ENCODE measurements at regions of chr13 and their contacts with region 1.

Region 1: DNA sequence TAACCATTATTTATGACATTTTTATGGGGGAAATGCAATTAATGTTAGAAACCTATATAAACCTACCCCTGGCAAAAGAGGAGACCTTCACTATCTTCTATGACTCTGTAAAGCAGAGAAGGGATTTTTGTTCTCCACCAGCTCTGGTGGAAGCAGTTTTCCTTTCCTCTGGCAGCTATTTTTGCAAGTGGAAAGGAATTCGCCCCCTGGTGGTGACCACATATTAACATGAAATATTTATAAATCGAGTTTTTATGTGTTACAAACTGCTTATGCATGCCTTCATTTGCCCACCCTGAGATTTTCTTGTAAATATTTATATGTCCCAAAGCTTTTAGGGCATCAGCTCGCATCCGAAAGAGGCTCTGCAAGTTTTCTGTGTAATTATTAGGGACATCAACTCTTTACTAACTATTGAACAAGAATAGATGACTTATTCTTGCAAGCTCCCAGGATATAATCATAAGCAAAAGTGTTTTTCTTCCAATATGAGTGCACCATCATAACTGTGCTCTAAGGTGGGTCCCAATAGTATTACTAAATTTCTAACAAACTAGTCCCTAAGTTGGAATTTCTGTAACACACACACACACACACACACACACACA is 62.4 kb downstream of the SERTM1 start:
- DNase-seq: no peak
- H3K4me3 ChIP-seq: no peak overlapping the region
- H3K27ac ChIP-seq: no peak overlapping the region
- H3K4me1 ChIP-seq: no peaks in the 10 kb centered on the region
- H3K27me3 ChIP-seq: no peaks in the 10 kb centered on the region
- CTCF ChIP-seq: peak in 2 of 3 experiments; percentile 35 to 58; a peak in 2 of 4 replicates
- EP300 ChIP-seq: no peak
- POLR2A ChIP-seq: no peak
- RAD21 ChIP-seq: peak; percentile 62 to 63

Region 2: DNA sequence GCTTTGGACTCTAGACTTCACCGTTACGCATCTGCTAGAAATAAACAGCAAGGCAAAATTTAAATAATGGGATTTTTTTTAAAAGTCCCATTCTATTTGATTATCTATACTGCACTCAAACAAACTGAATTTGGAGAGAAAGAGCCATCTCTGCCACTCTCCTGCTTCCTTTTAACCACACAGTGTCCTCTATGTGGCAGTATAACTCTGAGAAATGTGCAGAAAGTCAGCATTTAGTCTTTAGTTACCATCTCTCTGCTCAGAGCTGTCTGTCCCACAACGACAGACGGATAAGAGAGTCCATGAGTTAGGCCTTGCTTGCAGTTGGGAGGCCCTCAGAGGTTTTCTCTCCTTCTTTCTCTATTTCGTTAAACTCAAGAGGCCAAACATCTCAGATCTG is 282.7 kb before region 1 on chr13:
- CTCF ChIA-PET with region 1: interaction called, 53 read pairs
- POLR2A ChIA-PET with region 1: no interaction called
- DNase-seq: no peak
- H3K4me3 ChIP-seq: no peak overlapping the region
- H3K27ac ChIP-seq: no peak overlapping the region
- H3K4me1 ChIP-seq: peaks cover 2 to 9% (median 7%) of the 10 kb centered on the region in 4 experiments; a peak in 4 of 7 replicates
- H3K27me3 ChIP-seq: no peaks in the 10 kb centered on the region
- CTCF ChIP-seq: peak in 2 of 3 experiments; percentile 56 to 57; a peak in 3 of 4 replicates
- EP300 ChIP-seq: no peak
- POLR2A ChIP-seq: no peak
- RAD21 ChIP-seq: peak; percentile 85 to 89

Region 3: DNA sequence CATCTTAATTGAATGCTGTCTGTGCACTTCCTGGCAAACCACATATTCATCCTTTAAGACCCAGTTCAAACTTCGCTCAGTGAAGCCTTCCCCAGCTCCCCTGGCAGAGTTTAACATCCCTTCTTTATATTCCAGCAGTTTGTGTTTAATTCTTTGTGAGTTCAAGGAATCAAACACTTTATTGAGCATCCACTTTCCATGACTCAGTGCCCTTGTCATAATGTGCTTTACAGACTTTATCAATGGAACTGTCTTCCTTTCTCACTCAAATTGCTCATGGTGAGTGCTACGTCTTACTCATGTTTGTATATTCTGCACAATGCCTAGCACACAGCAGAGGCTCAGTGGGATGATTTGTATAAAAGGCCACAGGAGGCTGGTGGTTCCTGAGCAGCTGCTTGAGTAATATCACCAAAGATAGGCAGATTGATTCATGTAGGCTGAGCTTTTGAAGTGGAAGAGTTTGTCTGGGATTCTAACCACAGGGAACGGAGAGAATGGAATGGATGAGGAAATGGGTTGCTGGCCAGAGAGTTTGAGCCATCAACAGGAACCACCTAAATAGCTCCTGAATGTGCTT is 18.2 kb before region 1 on chr13:
- CTCF ChIA-PET with region 1: interaction called, 47 read pairs
- POLR2A ChIA-PET with region 1: no interaction called
- DNase-seq: no peak
- H3K4me3 ChIP-seq: no peak overlapping the region
- H3K27ac ChIP-seq: no peak overlapping the region
- H3K4me1 ChIP-seq: no peaks in the 10 kb centered on the region
- H3K27me3 ChIP-seq: peaks cover 0 to 1% (median 0%) of the 10 kb centered on the region in 4 experiments; a peak in 1 of 7 replicates
- CTCF ChIP-seq: no peak
- EP300 ChIP-seq: no peak
- POLR2A ChIP-seq: no peak
- RAD21 ChIP-seq: no peak

Region 4: GRCh38 chr13:36750461-36750860 is 14.2 kb after region 1 on chr13:
- CTCF ChIA-PET with region 1: interaction called, 21 read pairs
- POLR2A ChIA-PET with region 1: interaction called, 3 read pairs
- DNase-seq: no peak
- H3K4me3 ChIP-seq: no peak overlapping the region
- H3K27ac ChIP-seq: no peak overlapping the region
- H3K4me1 ChIP-seq: peaks cover 0 to 2% (median 0%) of the 10 kb centered on the region in 4 experiments; a peak in 1 of 7 replicates
- H3K27me3 ChIP-seq: no peaks in the 10 kb centered on the region
- CTCF ChIP-seq: no peak
- EP300 ChIP-seq: no peak
- POLR2A ChIP-seq: no peak
- RAD21 ChIP-seq: no peak